B cell (primary cell): ENCODE measurements at regions of chr13 and their contacts with region 1.

Region 1: DNA sequence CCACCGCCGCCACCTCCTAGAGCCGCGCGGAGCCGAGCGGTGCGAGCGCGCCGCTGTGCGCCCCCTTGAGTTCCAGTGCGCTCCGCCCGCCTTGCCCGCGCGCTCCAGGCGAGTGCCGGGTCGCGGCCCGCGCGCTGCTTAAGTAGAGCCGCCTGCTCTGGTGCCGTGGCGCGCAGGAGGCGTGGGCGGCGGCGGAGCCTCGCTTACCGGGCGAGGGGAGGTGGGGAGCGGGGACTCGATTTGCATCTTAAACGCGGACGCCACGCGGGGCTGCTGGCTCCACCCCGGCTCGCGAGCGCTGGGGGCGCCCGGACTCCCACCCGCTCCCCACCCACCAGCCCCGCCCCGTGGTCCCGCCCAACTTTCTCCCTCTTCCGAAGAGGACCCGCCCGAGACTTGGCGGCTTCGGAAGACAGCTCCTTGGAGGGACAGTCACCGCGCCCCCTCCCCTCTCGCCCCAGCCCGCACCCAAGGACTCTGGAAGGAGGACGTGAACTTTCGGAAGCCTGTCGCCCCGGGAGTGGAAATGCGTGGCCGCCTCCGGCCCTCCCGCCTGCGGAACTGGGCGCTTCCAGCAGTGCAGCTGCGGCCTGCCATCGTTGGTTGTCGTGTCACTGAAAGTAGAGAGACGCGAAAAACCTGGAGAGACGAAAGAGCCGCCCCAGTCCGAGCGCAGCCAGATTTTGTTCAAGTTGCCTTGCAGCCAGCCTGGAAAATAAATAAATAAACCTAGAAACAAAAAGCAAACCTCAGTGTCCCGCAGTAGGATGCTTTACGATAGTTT is at the start of gene KCTD12:
- DNase-seq: peak; percentile 90
- ATAC-seq: peak; percentile 79
- H3K4me3 ChIP-seq: peak within 1 kb of the TSS; percentile 45 to 67 (median 64)
- H3K4me3 Mint-ChIP-seq: peak within 1 kb of the TSS; percentile 96
- H3K27ac ChIP-seq: peak within 1 kb of the TSS in 1 of 2 donors; percentile 40
- H3K27ac Mint-ChIP-seq: peak within 1 kb of the TSS; percentile 88
- H3K4me1 ChIP-seq: peaks cover 7 to 24% of the 10 kb centered on the region in 2 donors
- H3K4me1 Mint-ChIP-seq: peaks cover 28% of the 10 kb centered on the region
- H3K27me3 ChIP-seq: peaks cover 0 to 3% (median 0%) of the 10 kb centered on the region in 4 experiments
- H3K27me3 Mint-ChIP-seq: peaks cover 3% of the 10 kb centered on the region
- CTCF ChIP-seq: peak; percentile 41
- total RNA-seq, gene KCTD12: 6.2 TPM in 2 replicates

Region 2: GRCh38 chr13:75635828-75636435 is 1250.6 kb before region 1 on chr13 and contains the start of gene LMO7:
- CTCF ChIA-PET with region 1: no interaction called
- POLR2A ChIA-PET with region 1: no interaction called
- intact Hi-C with region 1: loop called (anchors 2 kb)
- DNase-seq: no peak
- ATAC-seq: peak; percentile 68
- H3K4me3 ChIP-seq: peak within 1 kb of the TSS; percentile 48 to 86 (median 80)
- H3K4me3 Mint-ChIP-seq: peak within 1 kb of the TSS; percentile 87
- H3K27ac ChIP-seq: peak within 1 kb of the TSS in 1 of 2 donors; percentile 39
- H3K27ac Mint-ChIP-seq: peak within 1 kb of the TSS; percentile 71
- H3K4me1 ChIP-seq: peaks cover 5 to 14% of the 10 kb centered on the region in 2 donors
- H3K4me1 Mint-ChIP-seq: peaks cover 11% of the 10 kb centered on the region
- H3K27me3 ChIP-seq: peaks cover 0 to 5% (median 0%) of the 10 kb centered on the region in 4 experiments
- H3K27me3 Mint-ChIP-seq: peaks cover 9% of the 10 kb centered on the region
- CTCF ChIP-seq: no peak
- total RNA-seq, gene LMO7: 17.4 and 21.5 TPM in 2 replicates

Region 3: GRCh38 chr13:76874479-76874878 is 12.0 kb before region 1 on chr13:
- CTCF ChIA-PET with region 1: interaction called, 24 read pairs
- POLR2A ChIA-PET with region 1: no interaction called
- intact Hi-C with region 1: no loop called
- DNase-seq: peak; percentile 23
- ATAC-seq: no peak
- H3K4me3 ChIP-seq: no peak overlapping the region
- H3K4me3 Mint-ChIP-seq: no peak overlapping the region
- H3K27ac ChIP-seq: no peak overlapping the region
- H3K27ac Mint-ChIP-seq: no peak overlapping the region
- H3K4me1 ChIP-seq: peaks cover 3 to 6% of the 10 kb centered on the region in 2 donors
- H3K4me1 Mint-ChIP-seq: peaks cover 12% of the 10 kb centered on the region
- H3K27me3 ChIP-seq: peaks cover 0 to 6% (median 0%) of the 10 kb centered on the region in 4 experiments
- H3K27me3 Mint-ChIP-seq: peaks cover 8% of the 10 kb centered on the region
- CTCF ChIP-seq: no peak

Region 4: GRCh38 chr13:76991796-76992547 is 105.5 kb after region 1 on chr13 and contains the start of gene CLN5:
- CTCF ChIA-PET with region 1: no interaction called
- POLR2A ChIA-PET with region 1: interaction called, 4 read pairs
- intact Hi-C with region 1: loop called (anchors 2 kb)
- DNase-seq: peak; percentile 98
- ATAC-seq: peak; percentile 94
- H3K4me3 ChIP-seq: peak within 1 kb of the TSS; percentile 78 to 90 (median 86)
- H3K4me3 Mint-ChIP-seq: peak within 1 kb of the TSS; percentile 99
- H3K27ac ChIP-seq: peak within 1 kb of the TSS; percentile 88 to 93
- H3K27ac Mint-ChIP-seq: peak within 1 kb of the TSS; percentile 99
- H3K4me1 ChIP-seq: peaks cover 15 to 17% of the 10 kb centered on the region in 2 donors
- H3K4me1 Mint-ChIP-seq: peaks cover 28% of the 10 kb centered on the region
- H3K27me3 ChIP-seq: no peaks in the 10 kb centered on the region
- H3K27me3 Mint-ChIP-seq: peaks cover 5% of the 10 kb centered on the region
- CTCF ChIP-seq: no peak
- total RNA-seq, gene CLN5: 33.3 and 36.9 TPM in 2 replicates

Region 5: DNA sequence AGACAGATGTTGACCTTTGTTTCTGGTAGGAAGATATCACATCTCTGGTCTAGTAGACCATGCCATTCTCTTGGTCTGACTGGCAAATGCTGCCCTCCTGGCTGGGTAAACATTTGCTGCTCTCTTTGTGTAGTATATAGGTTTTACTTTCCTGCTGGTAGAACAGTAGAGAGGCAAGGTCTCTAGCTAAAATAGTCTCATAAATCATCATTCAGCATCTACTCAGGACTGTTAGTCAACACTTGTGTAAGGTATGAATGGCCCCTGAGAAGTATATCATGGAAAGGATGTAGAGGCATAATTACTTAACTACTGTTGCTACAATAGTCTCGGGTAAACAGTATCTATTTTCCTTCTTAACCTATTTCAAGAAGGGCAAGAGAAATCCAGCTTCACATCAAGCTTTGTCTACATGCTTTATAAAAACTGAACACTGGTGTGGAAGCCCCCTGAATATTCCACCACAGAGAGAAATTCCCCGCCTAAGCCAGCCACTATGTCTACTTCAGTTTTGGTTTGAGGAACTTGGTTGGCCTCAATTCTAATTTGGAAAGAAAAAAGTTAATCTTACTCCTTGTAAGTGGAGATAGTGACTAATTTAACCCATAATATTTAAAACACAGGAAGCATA is 458.8 kb after region 1 on chr13:
- CTCF ChIA-PET with region 1: no interaction called
- POLR2A ChIA-PET with region 1: no interaction called
- intact Hi-C with region 1: no loop called
- DNase-seq: peak; percentile 35
- ATAC-seq: peak; percentile 53
- H3K4me3 ChIP-seq: no peak overlapping the region
- H3K4me3 Mint-ChIP-seq: peak overlapping the region; percentile 69
- H3K27ac ChIP-seq: peak overlapping the region in 1 of 2 donors; percentile 80
- H3K27ac Mint-ChIP-seq: peak overlapping the region; percentile 83
- H3K4me1 ChIP-seq: peaks cover 27 to 36% of the 10 kb centered on the region in 2 donors
- H3K4me1 Mint-ChIP-seq: peaks cover 38% of the 10 kb centered on the region
- H3K27me3 ChIP-seq: no peaks in the 10 kb centered on the region
- H3K27me3 Mint-ChIP-seq: no peaks in the 10 kb centered on the region
- CTCF ChIP-seq: no peak

Region 6: DNA sequence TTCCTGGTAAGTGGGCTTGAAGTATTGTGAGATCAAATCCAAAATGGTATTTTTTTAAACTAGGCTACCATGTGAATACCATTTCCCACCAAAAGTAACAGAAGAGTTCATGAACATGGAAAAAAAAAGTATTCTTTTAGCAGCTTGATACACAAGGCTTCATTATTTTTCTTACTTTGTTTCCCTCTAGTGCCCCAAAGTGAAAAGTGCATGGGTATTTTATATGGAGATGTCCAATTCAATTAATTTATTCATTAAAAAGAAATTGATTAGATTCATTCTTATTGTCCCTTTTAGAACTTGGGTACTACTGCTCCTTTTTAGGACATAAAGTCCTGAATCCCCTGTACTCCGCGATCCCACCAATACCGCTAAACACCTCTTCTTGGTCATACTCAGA is 620.4 kb after region 1 on chr13:
- CTCF ChIA-PET with region 1: no interaction called
- POLR2A ChIA-PET with region 1: no interaction called
- intact Hi-C with region 1: no loop called
- DNase-seq: no peak
- ATAC-seq: no peak
- H3K4me3 ChIP-seq: no peak overlapping the region
- H3K4me3 Mint-ChIP-seq: no peak overlapping the region
- H3K27ac ChIP-seq: no peak overlapping the region
- H3K27ac Mint-ChIP-seq: no peak overlapping the region
- H3K4me1 ChIP-seq: peaks cover 20 to 22% of the 10 kb centered on the region in 2 donors
- H3K4me1 Mint-ChIP-seq: peaks cover 18% of the 10 kb centered on the region
- H3K27me3 ChIP-seq: peaks cover 0 to 4% (median 2%) of the 10 kb centered on the region in 4 experiments
- H3K27me3 Mint-ChIP-seq: peaks cover 4% of the 10 kb centered on the region
- CTCF ChIP-seq: peak; percentile 10

Region 7: DNA sequence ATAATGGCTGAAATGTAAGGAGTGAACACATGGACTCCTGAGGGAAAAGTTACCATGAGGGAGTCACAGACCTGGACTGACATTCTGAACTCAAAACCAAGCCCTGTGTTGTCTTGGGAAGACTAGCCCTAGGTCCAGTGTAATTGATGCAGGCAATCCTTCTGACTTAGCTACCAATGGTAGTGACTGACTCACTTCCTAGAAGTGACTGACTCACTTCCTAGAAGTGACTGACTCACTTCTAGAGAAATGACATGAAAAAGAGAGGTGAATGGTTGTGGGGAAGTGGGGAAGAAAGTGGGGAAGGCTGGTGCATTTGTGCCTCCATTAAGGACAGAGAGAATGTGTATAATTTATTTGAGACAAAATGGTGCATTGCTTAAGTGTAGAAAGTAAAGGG is 982.2 kb after region 1 on chr13:
- CTCF ChIA-PET with region 1: no interaction called
- POLR2A ChIA-PET with region 1: no interaction called
- intact Hi-C with region 1: no loop called
- DNase-seq: no peak
- ATAC-seq: no peak
- H3K4me3 ChIP-seq: no peak overlapping the region
- H3K4me3 Mint-ChIP-seq: no peak overlapping the region
- H3K27ac ChIP-seq: no peak overlapping the region
- H3K27ac Mint-ChIP-seq: no peak overlapping the region
- H3K4me1 ChIP-seq: no peaks in the 10 kb centered on the region
- H3K4me1 Mint-ChIP-seq: no peaks in the 10 kb centered on the region
- H3K27me3 ChIP-seq: peaks cover 0 to 4% (median 1%) of the 10 kb centered on the region in 4 experiments
- H3K27me3 Mint-ChIP-seq: peaks cover 15% of the 10 kb centered on the region
- CTCF ChIP-seq: no peak